ENCODE measurements at regions of chr9 and their contacts with region 1.

Region 1: DNA sequence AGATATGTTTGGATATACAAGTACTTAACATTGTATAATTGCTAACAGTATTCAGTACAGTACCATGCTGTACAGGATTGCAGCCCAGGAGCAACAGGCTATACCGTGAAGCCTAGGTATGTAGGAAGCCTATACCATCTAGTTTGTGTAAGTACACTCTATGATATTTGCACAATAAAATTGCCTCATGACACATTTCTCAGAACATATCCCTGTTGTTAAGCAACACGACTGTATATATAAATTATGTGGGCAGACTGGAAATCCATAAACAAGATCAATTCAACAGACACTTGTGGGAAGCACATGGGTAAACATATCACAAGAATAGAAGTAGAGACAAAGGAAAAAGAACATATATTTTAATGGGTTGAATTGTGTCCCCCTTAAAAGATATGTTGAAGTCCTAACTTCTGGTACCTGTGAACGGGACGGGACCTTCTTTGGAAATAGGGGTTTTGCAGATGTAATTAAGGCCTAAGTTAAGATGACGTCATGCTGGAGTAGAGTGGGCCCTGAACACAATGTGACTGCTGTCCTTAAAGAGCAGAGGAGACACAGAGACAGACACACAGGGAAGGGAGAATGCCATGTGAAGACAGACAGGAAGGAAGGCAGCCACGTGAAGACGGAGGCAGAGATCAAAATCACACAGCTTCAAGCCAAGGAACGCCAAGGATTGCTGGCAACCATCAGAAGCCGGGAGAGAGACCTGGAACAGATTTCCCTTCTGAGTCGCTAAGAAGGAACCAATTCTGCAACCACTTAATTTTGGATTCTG is 76.3 kb downstream of the SCAI start:
- DNase-seq: peak; percentile 93

Region 2: GRCh38 chr9:124940693-124941453 is 126.2 kb before region 1 on chr9 and contains the start of gene GOLGA1:
- in situ Hi-C with region 1: loop called (anchors 25 kb)
- DNase-seq: peak; percentile 92
- total RNA-seq, gene GOLGA1: 25.1 and 25.9 TPM in 2 replicates